ENCODE measurements at regions of chr2 and their contacts with region 1.

Region 1: DNA sequence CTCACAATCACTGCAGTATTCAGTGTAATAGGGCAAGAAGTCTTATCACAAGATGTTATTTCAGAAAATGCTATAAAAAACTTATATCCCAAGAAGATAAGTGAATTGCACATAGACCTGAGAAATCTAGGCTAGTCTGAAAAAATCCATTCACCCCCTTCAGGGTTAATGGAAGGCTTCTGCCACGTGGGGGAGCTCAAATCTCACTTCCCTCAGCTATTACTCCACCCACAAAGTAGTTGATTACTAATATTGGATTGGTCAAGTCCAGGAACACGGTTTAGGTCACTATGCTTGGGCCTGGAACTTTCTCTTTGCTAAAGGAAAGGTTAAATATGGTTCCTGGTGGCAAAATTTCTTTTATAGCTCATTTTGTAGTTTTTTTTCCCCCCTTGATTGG is 51.2 kb upstream of the ADAM23 start:
- DNase-seq: peak; percentile 21
- ATAC-seq: no peak
- H3K4me3 ChIP-seq: no peak overlapping the region
- H3K4me3 Mint-ChIP-seq: no peak overlapping the region
- H3K27ac ChIP-seq: no peak overlapping the region
- H3K27ac Mint-ChIP-seq: no peak overlapping the region
- H3K4me1 ChIP-seq: no peaks in the 10 kb centered on the region
- H3K4me1 Mint-ChIP-seq: no peaks in the 10 kb centered on the region
- H3K27me3 ChIP-seq: no peaks in the 10 kb centered on the region
- H3K27me3 Mint-ChIP-seq: no peaks in the 10 kb centered on the region
- CTCF ChIP-seq: peak; percentile 39

Region 2: GRCh38 chr2:206556357-206556949 is 164.3 kb after region 1 on chr2:
- CTCF ChIA-PET with region 1: interaction called, 3 read pairs
- POLR2A ChIA-PET with region 1: no interaction called
- intact Hi-C with region 1: loop called (anchors 10 kb)
- DNase-seq: peak; percentile 10
- ATAC-seq: no peak
- H3K4me3 ChIP-seq: no peak overlapping the region
- H3K4me3 Mint-ChIP-seq: no peak overlapping the region
- H3K27ac ChIP-seq: no peak overlapping the region
- H3K27ac Mint-ChIP-seq: no peak overlapping the region
- H3K4me1 ChIP-seq: no peaks in the 10 kb centered on the region
- H3K4me1 Mint-ChIP-seq: no peaks in the 10 kb centered on the region
- H3K27me3 ChIP-seq: no peaks in the 10 kb centered on the region
- H3K27me3 Mint-ChIP-seq: no peaks in the 10 kb centered on the region
- CTCF ChIP-seq: peak; percentile 64

Measured in B cell (primary cell).